Posterior cingulate gyrus (tissue), 11 donors: ENCODE measurements at regions of chr4 and their contacts with region 1.

Region 1: GRCh38 chr4:122922877-122923511 is 597 bp upstream of the NUDT6 start:
- DNase-seq: peak; percentile 85 to 98 (median 90)

Region 2: DNA sequence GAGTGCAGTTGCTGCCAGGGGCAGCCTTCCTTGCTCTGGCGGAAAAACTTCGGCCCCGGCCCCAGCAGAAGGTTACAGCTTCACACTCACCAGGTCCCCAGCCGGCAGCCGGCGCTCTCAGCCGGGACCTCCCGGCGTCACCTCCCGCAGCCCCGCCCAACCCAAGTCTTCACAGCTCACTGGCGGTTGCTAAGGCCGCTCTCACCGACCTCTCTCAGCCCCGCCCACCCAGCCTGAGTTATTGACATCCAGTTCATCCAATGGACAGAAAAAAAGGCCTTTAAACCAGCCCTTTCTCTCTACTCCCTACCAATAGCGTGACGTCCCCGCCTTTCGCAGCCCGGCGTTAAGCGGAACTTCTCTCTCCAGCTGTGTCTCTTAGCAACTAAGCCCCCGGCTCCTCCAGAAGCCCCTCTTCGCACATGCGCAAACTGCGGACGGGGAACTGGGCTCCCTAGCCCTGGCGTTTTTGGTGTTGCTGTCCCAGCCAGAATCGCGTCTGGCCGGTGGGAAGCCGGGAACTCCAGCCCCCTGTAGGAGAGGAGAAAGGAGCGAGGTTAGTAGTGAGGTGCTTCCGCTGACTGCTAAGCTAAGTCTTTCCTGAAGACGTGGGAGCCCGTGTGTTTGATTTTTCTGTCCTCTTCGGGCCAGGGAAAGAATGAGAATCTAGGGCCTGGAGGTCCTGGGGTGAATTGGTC is 190.5 kb before region 1 on chr4 and contains the start of gene BBS12:
- intact Hi-C with region 1: loop called (anchors 5 kb)
- DNase-seq: peak; percentile 97 to 100 (median 99)

Region 3: GRCh38 chr4:122827879-122828601 is 95.0 kb before region 1 on chr4:
- intact Hi-C with region 1: loop called (anchors 5 kb)
- DNase-seq: no peak

Region 4: DNA sequence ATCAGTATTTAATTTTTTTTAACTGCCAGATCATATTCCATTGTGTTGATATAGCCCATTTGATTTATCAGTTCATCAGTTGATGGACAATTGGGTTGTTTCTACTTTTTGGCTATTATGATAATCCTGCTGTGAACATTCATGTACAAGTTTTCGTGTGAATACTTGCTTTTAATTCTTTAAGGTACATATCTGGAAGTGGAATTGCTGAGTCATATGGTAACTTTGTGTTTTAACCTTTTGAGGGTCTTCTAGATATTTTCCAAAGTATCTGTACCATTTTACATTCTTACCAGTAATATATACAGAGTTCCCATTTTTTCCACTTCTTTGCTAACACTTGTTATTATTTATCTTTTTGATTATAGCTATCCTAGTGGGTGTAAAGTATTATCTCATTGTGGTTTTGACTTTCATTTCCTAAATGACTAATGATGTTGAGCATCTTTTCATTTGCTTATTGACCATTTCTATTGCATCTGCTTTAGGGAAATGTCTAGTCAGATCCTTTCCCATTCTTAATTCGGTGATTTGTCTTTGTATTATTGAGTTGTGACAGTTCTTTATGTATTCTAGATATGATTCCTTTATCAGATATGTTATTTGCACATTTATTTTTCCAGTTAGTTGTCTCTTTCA is 74.6 kb after region 1 on chr4:
- intact Hi-C with region 1: no loop called
- DNase-seq: no peak

Region 5: GRCh38 chr4:123064390-123064789 is 141.4 kb after region 1 on chr4:
- intact Hi-C with region 1: no loop called
- DNase-seq: no peak

Region 6: GRCh38 chr4:123469245-123469644 is 546.3 kb after region 1 on chr4:
- intact Hi-C with region 1: no loop called
- DNase-seq: no peak